ENCODE measurements at regions of chr12 and their contacts with region 1.

Region 1: GRCh38 chr12:113049976-113050742 is 6.4 kb upstream of the DTX1 start:
- DNase-seq: peak in 3 of 4 donors; percentile 39 to 64 (median 46)
- ATAC-seq: no peak
- H3K4me3 ChIP-seq: no peak overlapping the region
- H3K27ac ChIP-seq: no peak overlapping the region
- H3K4me1 ChIP-seq: no peaks in the 10 kb centered on the region
- H3K27me3 ChIP-seq: no peaks in the 10 kb centered on the region
- CTCF ChIP-seq: peak in 5 of 7 experiments; percentile 9 to 40 (median 31)
- POLR2A ChIP-seq: no peak

Region 2: GRCh38 chr12:113159937-113160336 is 109.8 kb after region 1 on chr12:
- intact Hi-C with region 1: loop called (anchors 5 kb)
- DNase-seq: no peak
- ATAC-seq: no peak
- H3K4me3 ChIP-seq: no peak overlapping the region
- H3K27ac ChIP-seq: no peak overlapping the region
- H3K4me1 ChIP-seq: peaks cover 14% of the 10 kb centered on the region
- H3K27me3 ChIP-seq: no peaks in the 10 kb centered on the region
- CTCF ChIP-seq: no peak
- POLR2A ChIP-seq: no peak

Region 3: DNA sequence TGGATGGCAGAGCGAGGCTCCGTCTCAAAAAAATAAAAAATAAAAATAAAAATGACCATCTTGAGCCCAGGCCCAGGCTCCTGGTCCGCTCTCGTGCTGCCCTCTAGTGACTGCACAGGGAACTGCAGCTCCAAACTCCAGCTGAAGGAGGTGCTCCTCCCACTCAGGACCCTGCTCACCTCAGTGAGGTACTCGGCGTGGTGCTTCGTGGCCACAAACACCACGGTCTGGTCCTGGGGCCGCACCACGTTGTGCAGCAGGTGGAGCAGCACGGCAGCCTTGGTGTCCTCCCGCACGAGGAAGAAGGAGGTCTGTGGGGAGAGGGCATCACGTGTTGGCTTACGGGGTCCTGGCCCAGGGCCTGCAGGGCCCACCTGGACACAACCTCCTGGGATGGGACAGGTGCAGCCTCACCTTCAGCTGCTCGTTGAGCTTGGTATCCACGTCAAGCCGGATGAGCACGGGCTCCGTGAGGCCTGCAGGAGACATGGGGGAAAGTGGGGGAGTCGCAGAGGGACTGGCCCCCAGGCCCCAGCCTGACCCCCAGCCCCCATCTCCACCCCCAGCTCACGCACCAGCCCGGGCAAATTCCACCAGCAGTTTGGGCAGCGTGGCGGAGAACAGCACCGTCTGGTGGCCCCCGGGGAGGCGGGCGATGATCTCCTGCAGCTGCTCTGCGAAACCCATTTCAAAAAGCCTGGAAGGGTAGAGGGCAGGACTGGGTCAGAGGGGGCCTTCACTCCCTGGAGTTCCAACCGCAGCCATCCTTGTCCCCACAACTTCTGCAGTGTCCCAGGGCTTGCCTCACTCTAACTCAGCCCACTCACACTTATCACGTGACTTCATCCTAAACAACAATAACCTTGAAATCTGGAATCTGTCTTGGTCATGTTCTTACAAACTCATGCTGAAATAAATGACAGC is 124.6 kb after region 1 on chr12:
- intact Hi-C with region 1: loop called (anchors 5 kb)
- DNase-seq: peak; percentile 70 to 84 (median 76)
- ATAC-seq: peak; percentile 75
- H3K4me3 ChIP-seq: no peak overlapping the region
- H3K27ac ChIP-seq: no peak overlapping the region
- H3K4me1 ChIP-seq: no peaks in the 10 kb centered on the region
- H3K27me3 ChIP-seq: no peaks in the 10 kb centered on the region
- CTCF ChIP-seq: peak; percentile 85 to 99 (median 96)
- POLR2A ChIP-seq: no peak

Region 4: GRCh38 chr12:113577464-113578129 is 527.4 kb after region 1 on chr12:
- intact Hi-C with region 1: no loop called
- DNase-seq: no peak
- ATAC-seq: no peak
- H3K4me3 ChIP-seq: no peak overlapping the region
- H3K27ac ChIP-seq: no peak overlapping the region
- H3K4me1 ChIP-seq: no peaks in the 10 kb centered on the region
- H3K27me3 ChIP-seq: peaks cover 0 to 5% of the 10 kb centered on the region in 2 donors
- CTCF ChIP-seq: no peak
- POLR2A ChIP-seq: no peak